ENCODE measurements at regions of chr12 and their contacts with region 1.

Region 1: DNA sequence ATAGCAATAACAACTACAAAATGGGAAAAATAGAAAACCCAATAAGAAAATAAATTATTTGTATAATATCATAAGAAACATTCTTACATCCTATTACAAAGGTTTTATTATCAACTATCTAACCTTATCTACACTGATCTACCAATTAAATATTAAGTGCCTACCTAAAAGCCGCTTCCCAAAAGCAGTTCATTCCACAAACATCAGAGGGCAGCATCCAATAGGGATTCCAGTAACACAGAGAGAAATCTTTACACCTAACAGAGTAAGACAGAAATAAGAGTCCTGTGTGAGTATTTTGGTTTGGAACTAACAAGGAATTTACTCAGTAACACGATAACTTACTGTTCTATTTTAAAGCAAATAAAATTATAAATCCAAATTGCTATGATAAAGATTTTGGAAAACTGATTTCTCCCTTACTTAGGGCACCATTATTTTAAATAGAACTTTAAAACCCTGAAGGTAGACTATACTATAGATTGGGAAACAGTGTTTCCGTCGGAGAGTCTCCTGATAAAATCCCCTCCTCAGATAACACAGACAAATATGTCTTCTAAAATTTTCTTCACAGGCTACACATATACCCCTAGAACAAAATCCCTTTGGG is 15.0 kb downstream of the GXYLT1 start:
- DNase-seq: no peak
- ATAC-seq: peak; percentile 79

Region 2: GRCh38 chr12:42332301-42333285 is 202.9 kb after region 1 on chr12:
- intact Hi-C with region 1: loop called (anchors 2 kb)
- DNase-seq: no peak
- ATAC-seq: peak; percentile 44

Region 3: DNA sequence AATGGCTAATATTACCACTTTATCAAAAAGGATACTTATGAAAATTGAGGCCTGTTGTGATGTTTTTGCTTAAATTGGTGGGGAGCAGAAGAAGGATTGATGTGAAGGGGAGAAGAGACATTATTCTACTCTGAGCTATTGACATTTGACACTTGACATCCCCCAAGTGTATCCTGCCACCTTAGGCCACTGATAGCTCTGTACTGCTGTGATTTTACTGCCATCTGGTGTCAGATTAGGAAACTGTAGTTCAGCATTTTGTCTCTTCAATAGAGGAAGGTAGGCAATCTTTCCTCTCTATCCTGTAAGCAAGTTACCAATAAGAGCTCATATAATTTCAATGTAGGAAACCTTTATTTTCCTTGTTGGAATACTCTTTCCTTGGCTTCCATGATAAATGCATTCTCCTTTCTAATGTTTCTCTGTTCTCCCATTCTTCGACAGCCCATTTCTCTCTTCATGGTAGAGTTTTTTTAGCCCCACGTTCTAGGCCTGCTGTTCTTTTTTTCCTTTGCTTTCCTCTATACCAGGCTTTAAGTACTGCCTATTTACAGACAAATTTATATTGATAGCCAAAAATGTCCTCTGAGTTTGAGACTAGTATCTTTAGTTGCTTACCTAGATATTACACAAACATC is 242.6 kb after region 1 on chr12:
- intact Hi-C with region 1: loop called (anchors 1 kb)
- DNase-seq: no peak
- ATAC-seq: peak; percentile 54

Region 4: GRCh38 chr12:42568952-42569915 is 439.5 kb after region 1 on chr12:
- intact Hi-C with region 1: loop called (anchors 10 kb)
- DNase-seq: no peak
- ATAC-seq: peak; percentile 71